ENCODE measurements at regions of chr15 and their contacts with region 1.

Region 1: DNA sequence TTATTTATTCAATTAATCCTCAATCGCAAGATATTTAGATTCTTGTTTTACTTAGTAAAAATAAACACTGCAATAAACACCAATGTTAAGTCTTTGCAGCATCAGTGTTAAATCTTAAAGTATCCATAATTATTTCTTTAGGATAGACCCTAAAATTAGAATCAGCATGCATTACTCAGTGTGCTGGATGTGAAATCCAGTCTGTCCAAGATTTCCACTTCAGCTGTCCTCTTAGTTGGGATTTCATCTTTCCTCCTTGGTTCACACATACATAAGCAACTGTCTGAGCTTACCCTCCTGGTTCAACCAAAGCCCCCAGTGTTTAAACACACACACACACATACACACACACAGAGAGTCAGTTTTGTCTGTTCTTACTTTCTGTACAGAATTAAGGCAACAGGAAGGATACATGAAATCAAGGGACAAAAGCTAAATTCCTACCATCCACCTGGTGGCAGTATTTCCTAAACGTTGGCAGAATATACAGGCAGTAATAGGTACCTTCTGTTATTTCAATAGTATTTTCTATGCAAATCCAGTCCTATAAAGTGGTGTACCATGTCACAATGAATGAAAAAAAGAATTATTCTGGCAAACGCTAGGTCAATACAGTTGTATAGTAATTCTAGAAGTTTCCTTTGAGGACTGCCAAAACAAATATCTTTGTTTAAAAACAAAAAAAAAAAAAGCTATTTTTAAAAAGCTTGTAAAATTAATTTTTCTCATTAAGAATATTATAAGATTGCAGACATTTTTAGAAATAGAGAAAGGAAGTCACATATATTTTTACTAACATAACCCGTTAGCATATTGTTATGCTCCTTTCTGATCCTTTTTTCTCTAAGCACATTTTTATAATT is 27.3 kb upstream of the DMXL2 start:
- DNase-seq: peak; percentile 34 to 79 (median 45)
- ATAC-seq: peak; percentile 76
- H3K4me3 ChIP-seq: no peak overlapping the region
- H3K27ac ChIP-seq: no peak overlapping the region
- H3K4me1 ChIP-seq: no peaks in the 10 kb centered on the region
- H3K27me3 ChIP-seq: no peaks in the 10 kb centered on the region
- CTCF ChIP-seq: peak; percentile 38 to 93 (median 87)
- POLR2A ChIP-seq: no peak

Region 2: GRCh38 chr15:51759557-51760070 is 109.7 kb after region 1 on chr15:
- intact Hi-C with region 1: no loop called
- DNase-seq: peak in 3 of 4 donors; percentile 35 to 65 (median 41)
- ATAC-seq: peak; percentile 52
- H3K4me3 ChIP-seq: no peak overlapping the region
- H3K27ac ChIP-seq: no peak overlapping the region
- H3K4me1 ChIP-seq: no peaks in the 10 kb centered on the region
- H3K27me3 ChIP-seq: no peaks in the 10 kb centered on the region
- CTCF ChIP-seq: peak in 1 of 7 experiments; percentile 3
- POLR2A ChIP-seq: no peak

Region 3: GRCh38 chr15:51771773-51772172 is 121.9 kb after region 1 on chr15:
- intact Hi-C with region 1: loop called (anchors 5 kb)
- DNase-seq: peak in 1 of 4 donors; percentile 11
- ATAC-seq: no peak
- H3K4me3 ChIP-seq: no peak overlapping the region
- H3K27ac ChIP-seq: no peak overlapping the region
- H3K4me1 ChIP-seq: peaks cover 6% of the 10 kb centered on the region
- H3K27me3 ChIP-seq: no peaks in the 10 kb centered on the region
- CTCF ChIP-seq: no peak
- POLR2A ChIP-seq: no peak

Measured in body of pancreas (tissue), 4 donors.